ENCODE measurements at regions of chr10 and their contacts with region 1.

Region 1: GRCh38 chr10:89147256-89147655 is 59.9 kb downstream of the CH25H start:
- DNase-seq: no peak
- ATAC-seq: no peak
- H3K4me3 ChIP-seq: no peak overlapping the region
- H3K27ac ChIP-seq: no peak overlapping the region
- H3K4me1 ChIP-seq: peaks cover 0 to 15% (median 0%) of the 10 kb centered on the region in 9 donors
- H3K27me3 ChIP-seq: no peaks in the 10 kb centered on the region
- CTCF ChIP-seq: no peak

Region 2: DNA sequence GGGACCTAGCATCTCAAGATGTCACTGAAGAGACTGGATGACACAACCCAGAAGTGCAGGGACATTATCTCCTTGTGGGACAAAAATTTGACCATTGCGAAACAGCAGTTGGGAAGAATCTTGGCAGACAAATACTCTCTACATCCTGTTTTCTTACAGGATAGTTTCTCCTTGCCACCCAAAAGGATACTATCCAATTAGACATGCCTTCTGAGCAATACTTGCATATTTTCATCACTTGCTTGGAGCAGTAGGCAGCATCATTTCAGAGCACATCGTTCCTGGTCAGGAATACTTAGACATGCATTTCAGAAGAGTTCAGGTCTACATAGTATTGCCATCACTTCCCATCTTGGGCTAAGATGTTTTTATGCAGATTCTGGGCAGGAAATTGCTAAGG is 99.9 kb before region 1 on chr10:
- intact Hi-C with region 1: no loop called
- DNase-seq: no peak
- ATAC-seq: peak in 1 of 8 donors; percentile 28
- H3K4me3 ChIP-seq: no peak overlapping the region
- H3K27ac ChIP-seq: no peak overlapping the region
- H3K4me1 ChIP-seq: peaks cover 0 to 14% (median 0%) of the 10 kb centered on the region in 9 donors
- H3K27me3 ChIP-seq: no peaks in the 10 kb centered on the region
- CTCF ChIP-seq: no peak

Region 3: DNA sequence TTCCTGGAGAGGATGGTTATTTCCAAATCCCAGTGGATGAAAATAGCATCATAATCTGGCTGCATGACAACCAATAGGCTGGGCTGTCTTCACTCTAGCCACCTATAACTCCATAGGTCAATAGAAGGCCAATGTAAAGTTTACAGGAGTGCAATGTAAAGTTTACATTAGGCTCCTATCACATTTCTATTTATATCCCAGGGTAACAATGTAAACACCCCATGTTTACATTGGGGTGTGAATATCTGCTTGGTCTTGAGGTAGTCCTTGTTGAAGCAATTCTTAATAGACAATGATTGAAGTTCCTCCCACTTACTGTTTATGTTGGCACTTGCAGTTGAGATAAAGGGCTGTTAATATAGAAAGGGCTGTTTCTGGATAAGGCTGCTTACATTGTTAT is 38.4 kb after region 1 on chr10:
- intact Hi-C with region 1: loop called in 1 of 10 experiments (anchors 5 kb)
- DNase-seq: no peak
- ATAC-seq: no peak
- H3K4me3 ChIP-seq: no peak overlapping the region
- H3K27ac ChIP-seq: no peak overlapping the region
- H3K4me1 ChIP-seq: peaks cover 0 to 6% (median 0%) of the 10 kb centered on the region in 9 donors
- H3K27me3 ChIP-seq: no peaks in the 10 kb centered on the region
- CTCF ChIP-seq: no peak